Dendritic cell treated with granulocyte-macrophage colony-stimulating factor and Interleukin-4, amounts not matched to agents 40 ng/mL and 50 ng/mL, for 4 days (primary cell): ENCODE measurements at regions of chr6 and their contacts with region 1.

Region 1: GRCh38 chr6:29016559-29017427 is 11.7 kb upstream of the ZNF311 start:
- H3K4me3 Mint-ChIP-seq: peak overlapping the region; percentile 80
- H3K27ac Mint-ChIP-seq: peak overlapping the region; percentile 46
- H3K4me1 Mint-ChIP-seq: peaks cover 14% of the 10 kb centered on the region
- H3K27me3 Mint-ChIP-seq: peaks cover 59% of the 10 kb centered on the region

Region 2: DNA sequence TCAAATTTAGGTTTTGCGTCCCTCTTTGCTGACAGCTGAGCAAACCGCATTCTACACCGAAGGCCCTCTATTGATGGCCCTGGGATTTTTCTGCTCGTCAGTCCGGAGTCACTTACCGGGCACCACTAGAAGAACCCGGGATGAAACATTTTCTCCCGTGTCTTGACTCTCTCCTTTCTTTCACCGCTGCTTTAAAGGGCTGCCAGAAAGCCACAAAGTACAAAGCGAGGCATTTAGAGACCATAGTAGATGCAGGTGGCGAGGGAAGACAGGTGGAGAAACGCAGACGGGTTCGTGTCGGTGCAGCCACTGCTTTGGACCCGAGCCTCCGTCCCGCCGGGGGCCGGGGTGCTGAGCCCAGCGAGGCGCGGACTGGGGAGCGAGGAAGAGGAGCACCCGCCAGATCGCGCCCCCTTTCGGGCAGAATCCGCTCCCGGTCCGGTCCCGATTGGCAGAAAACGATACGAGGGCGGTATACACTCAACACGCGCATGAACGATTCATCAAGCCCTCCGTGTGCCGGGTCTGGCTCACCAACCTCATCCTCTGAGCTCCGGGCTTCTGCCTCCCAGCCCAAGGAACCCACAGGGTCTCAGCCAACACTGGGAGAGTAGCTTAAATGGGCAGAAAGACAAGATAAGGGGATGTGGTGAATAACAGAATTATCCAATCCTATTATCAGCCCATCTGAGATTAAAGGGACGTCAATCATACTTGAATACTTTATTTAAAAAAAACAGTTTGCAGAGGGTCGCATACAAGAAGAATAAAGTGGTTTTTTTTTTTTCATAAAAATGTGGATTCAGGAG is 178.0 kb before region 1 on chr6:
- intact Hi-C with region 1: loop called (anchors 1 kb)
- H3K4me3 Mint-ChIP-seq: peak overlapping the region; percentile 83
- H3K27ac Mint-ChIP-seq: peak overlapping the region; percentile 70
- H3K4me1 Mint-ChIP-seq: peaks cover 22% of the 10 kb centered on the region
- H3K27me3 Mint-ChIP-seq: peaks cover 79% of the 10 kb centered on the region

Region 3: DNA sequence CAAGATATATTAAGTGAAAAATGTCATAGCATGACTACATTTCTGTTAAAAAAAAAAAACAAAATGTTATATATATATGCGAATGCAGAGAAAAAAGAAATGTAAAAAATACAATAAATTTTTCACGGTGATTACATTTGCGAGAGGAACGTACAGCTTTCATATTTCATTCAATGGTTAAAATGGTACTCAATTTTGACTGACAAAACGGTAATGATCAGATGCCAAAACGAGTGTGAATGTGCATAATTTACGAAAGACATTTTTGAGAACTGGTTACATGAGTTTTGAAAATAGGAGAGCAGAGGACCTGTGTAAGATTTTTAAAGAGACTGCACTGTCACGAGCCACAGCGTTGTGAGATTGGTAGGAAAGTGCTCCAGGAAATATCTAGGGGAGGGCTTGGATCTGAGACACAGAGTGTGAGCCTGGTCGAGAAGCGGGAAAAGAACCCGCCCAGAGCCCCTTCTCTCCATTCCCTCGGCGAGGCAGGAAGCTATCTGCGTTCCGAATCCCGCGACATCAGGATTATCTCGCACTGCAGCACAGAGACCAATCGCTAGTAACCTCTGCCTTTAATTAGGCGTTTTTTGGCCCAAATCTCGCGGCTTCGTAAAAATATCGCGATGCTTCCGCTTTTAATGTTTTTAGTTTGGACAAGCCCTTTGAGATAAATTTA is 121.5 kb before region 1 on chr6:
- intact Hi-C with region 1: no loop called
- H3K4me3 Mint-ChIP-seq: peak overlapping the region; percentile 90
- H3K27ac Mint-ChIP-seq: peak overlapping the region; percentile 99
- H3K4me1 Mint-ChIP-seq: peaks cover 27% of the 10 kb centered on the region
- H3K27me3 Mint-ChIP-seq: peaks cover 8% of the 10 kb centered on the region